HepG2 (cell line): ENCODE measurements at regions of chr12 and their contacts with region 1.

Region 1: GRCh38 chr12:71392521-71393145 is 47.0 kb upstream of the LGR5 start:
- DNase-seq: peak; percentile 69
- ATAC-seq: peak; percentile 90
- H3K4me3 ChIP-seq: no peak overlapping the region; a peak in 1 of 6 replicates
- H3K27ac ChIP-seq: no peak overlapping the region
- H3K4me1 ChIP-seq: no peaks in the 10 kb centered on the region
- H3K27me3 ChIP-seq: no peaks in the 10 kb centered on the region; a peak in 1 of 5 replicates
- CTCF ChIP-seq: peak; percentile 85
- EP300 ChIP-seq: no peak
- POLR2A ChIP-seq: no peak
- RAD21 ChIP-seq: 0 out of 2 replicates have a peak, but pooled peaks have one; percentile 44

Region 2: GRCh38 chr12:71216725-71217579 is 175.7 kb before region 1 on chr12:
- CTCF ChIA-PET with region 1: no interaction called
- POLR2A ChIA-PET with region 1: no interaction called
- in situ Hi-C with region 1: no loop called
- intact Hi-C with region 1: loop called (anchors 2 kb)
- DNase-seq: peak; percentile 28
- ATAC-seq: peak; percentile 81
- H3K4me3 ChIP-seq: no peak overlapping the region
- H3K27ac ChIP-seq: no peak overlapping the region
- H3K4me1 ChIP-seq: peaks cover 26% of the 10 kb centered on the region
- H3K27me3 ChIP-seq: no peaks in the 10 kb centered on the region
- CTCF ChIP-seq: peak; percentile 61
- EP300 ChIP-seq: no peak
- POLR2A ChIP-seq: no peak
- RAD21 ChIP-seq: peak; percentile 34; the same call in 1 of the 2 replicates